PC-3 (cell line): ENCODE measurements at regions of chr12 and their contacts with region 1.

Region 1: GRCh38 chr12:109020796-109021380 is at the start of gene SVOP:
- DNase-seq: peak; percentile 79
- ATAC-seq: peak; percentile 95
- H3K4me3 ChIP-seq: no peak within 1 kb of the TSS
- H3K27ac ChIP-seq: no peak within 1 kb of the TSS
- H3K4me1 ChIP-seq: no peaks in the 10 kb centered on the region
- H3K27me3 ChIP-seq: peaks cover 9% of the 10 kb centered on the region
- CTCF ChIP-seq: no peak
- total RNA-seq, gene SVOP: not detected in 2 replicates

Region 2: GRCh38 chr12:108838194-108839017 is 182.5 kb before region 1 on chr12:
- CTCF ChIA-PET with region 1: no interaction called
- POLR2A ChIA-PET with region 1: no interaction called
- intact Hi-C with region 1: no loop called
- DNase-seq: peak; percentile 99
- ATAC-seq: peak; percentile 97
- H3K4me3 ChIP-seq: peak overlapping the region; percentile 23; the same call in 1 of the 2 replicates
- H3K27ac ChIP-seq: peak overlapping the region; percentile 92
- H3K4me1 ChIP-seq: peaks cover 36% of the 10 kb centered on the region
- H3K27me3 ChIP-seq: no peaks in the 10 kb centered on the region
- CTCF ChIP-seq: no peak

Region 3: GRCh38 chr12:108918206-108918605 is 102.7 kb before region 1 on chr12:
- CTCF ChIA-PET with region 1: no interaction called
- POLR2A ChIA-PET with region 1: interaction called, 11 read pairs
- intact Hi-C with region 1: no loop called
- DNase-seq: no peak
- ATAC-seq: no peak
- H3K4me3 ChIP-seq: no peak overlapping the region
- H3K27ac ChIP-seq: no peak overlapping the region
- H3K4me1 ChIP-seq: 0 out of 2 replicates have a peak, but pooled peaks cover 5% of the 10 kb centered on the region
- H3K27me3 ChIP-seq: peaks cover 24% of the 10 kb centered on the region
- CTCF ChIP-seq: no peak